Activated naive CD4-positive, alpha-beta T cell treated with anti-CD3 and anti-CD28 coated beads, Interleukin-2, amount 10 ng/mL, durations not matched to agents 7 days and 5 days (primary cell): ENCODE measurements at regions of chr15 and their contacts with region 1.

Region 1: DNA sequence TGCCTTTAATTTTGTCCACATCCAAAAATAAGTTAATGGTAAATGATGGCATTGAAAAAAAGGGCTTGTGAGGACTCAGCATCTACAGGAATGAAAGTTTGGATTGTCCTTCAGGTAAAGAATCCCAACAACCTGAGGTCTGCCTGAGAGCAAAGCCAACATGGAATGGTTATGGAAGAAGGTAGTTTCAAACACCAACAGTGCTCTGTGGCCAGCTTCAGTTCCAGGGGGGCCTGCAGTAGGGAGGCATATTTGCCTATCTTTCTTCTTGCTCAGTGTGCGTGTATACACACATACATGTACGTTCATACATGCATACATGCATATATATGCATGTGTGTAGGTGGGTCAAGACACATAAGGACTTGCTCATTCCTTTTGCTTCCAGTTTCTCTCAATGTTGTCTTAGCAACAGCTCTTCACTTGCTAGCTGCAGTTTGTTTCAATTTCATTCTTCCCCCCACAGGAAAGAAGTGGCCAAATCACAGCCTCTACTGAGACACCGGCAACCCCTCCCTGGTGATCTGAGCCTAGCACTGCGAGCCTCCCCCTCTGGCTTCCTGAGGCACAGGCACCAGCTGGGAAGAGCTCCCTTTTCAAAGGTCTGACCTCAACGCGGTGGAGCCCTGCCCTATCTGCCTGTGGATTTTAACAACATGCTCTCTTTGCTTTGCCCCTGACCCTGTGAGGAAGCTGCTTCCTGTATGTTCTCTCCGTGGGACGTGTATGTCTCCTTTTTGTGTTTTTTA is 146.2 kb downstream of the KLF13 start:
- DNase-seq: peak; percentile 86
- H3K4me3 Mint-ChIP-seq: peak overlapping the region; percentile 36
- H3K27ac Mint-ChIP-seq: peak overlapping the region; percentile 91
- H3K4me1 Mint-ChIP-seq: peaks cover 47% of the 10 kb centered on the region
- H3K27me3 Mint-ChIP-seq: peaks cover 6% of the 10 kb centered on the region

Region 2: GRCh38 chr15:31458591-31459399 is 14.0 kb before region 1 on chr15:
- CTCF ChIA-PET with region 1: interaction called, 10 read pairs
- DNase-seq: peak; percentile 14
- H3K4me3 Mint-ChIP-seq: no peak overlapping the region
- H3K27ac Mint-ChIP-seq: no peak overlapping the region
- H3K4me1 Mint-ChIP-seq: peaks cover 25% of the 10 kb centered on the region
- H3K27me3 Mint-ChIP-seq: peaks cover 4% of the 10 kb centered on the region